Posterior vena cava (tissue), 2 donors: ENCODE measurements at regions of chr9 and their contacts with region 1.

Region 1: DNA sequence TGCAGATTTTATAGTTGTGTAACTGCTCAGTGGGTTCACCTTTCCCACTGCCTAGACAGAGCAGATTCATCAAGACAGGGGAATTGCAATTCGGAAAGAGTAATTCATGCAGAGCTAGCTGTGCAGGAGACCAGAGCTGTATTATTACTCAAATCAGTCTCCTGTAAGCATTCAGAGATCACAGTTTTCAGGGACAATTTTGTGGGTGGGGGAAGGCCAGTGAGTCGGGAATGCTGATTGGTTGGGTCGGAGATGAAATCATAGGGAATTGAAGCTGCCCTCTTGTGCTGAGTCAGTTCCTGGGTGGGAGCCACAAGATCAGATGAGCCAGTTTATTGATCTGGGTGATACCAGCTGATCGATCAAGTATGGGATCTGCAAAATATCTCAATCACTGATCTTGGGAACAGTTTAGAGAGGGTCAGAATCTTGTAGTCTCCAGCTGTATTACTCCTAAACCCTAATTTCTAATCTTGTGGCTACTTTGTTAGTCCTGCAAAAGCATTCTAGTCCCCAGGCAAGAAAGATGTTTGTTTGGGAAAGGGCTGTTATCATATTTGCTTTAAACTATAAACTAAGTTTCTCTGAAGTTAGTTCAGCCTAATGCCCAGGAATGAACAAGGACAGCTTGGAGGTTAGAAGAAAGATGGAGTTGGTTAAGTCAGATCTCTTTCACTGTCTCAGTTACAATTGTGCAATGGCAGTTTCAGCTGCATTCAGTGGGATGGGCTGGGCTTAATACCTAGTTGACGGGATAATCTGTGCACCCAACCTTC is 12.7 kb upstream of the SVEP1 start:
- DNase-seq: no peak

Region 2: DNA sequence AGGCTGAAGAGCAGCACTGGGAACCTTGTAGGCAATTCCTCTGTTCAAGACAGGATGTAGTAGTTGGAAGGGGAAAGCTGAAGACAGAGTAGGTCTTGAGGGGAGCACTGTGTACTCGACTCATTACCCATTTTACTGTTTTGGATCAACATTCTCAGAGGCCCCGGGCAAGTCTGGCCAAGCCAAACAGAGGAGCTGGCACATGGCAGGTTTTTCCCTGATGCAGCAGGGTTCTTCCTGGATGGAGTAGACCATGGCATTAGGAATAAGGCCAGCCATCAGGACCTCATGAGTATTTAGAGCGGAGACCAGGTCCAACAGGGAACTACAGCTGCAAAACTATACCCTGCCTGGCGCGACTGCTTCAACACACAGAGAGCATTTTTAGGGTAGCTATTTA is 17.1 kb before region 1 on chr9:
- intact Hi-C with region 1: loop called in 1 of 2 experiments (anchors 1 kb)
- DNase-seq: no peak